B cell (primary cell): ENCODE measurements at regions of chr1 and their contacts with region 1.

Region 1: GRCh38 chr1:167121375-167122120 is 27.7 kb downstream of the STYXL2 start:
- DNase-seq: peak; percentile 34
- ATAC-seq: no peak
- H3K4me3 ChIP-seq: peak overlapping the region in 4 of 5 experiments; percentile 16 to 59 (median 46)
- H3K4me3 Mint-ChIP-seq: peak overlapping the region; percentile 84
- H3K27ac ChIP-seq: no peak overlapping the region
- H3K27ac Mint-ChIP-seq: peak overlapping the region; percentile 22
- H3K4me1 ChIP-seq: peaks cover 8 to 9% of the 10 kb centered on the region in 2 donors
- H3K4me1 Mint-ChIP-seq: peaks cover 4% of the 10 kb centered on the region
- H3K27me3 ChIP-seq: peaks cover 0 to 23% (median 6%) of the 10 kb centered on the region in 4 experiments
- H3K27me3 Mint-ChIP-seq: peaks cover 42% of the 10 kb centered on the region
- CTCF ChIP-seq: no peak

Region 2: DNA sequence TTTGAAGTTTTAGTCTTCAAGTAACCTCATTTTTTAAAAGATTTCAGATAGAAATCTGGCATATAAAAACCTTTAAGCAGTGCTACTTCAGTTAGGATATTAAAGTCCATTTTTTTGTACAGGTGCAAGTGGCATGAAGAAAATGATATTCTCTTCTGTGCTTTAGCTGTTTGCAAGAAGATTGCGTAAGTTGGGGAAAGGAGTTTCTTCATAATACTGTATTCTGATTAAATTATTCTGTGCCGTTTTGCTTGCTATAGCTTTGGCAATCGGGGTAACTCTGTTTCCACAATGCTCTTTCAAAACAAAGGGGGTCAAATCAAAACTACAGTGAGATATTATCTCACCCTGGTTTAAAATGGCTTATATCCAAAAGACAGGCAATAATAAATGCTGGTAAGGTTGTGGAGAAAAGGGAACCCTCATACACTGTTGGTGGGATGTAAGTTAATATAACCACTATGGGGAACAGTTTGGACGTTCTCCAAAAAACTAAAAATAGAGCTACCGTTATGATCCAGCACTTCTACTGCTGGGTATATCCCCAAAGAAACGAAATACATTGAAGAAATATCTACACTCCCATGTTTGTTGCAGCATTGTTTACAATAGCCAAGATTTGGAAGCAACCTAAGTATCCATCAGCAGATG is 105.3 kb before region 1 on chr1:
- CTCF ChIA-PET with region 1: no interaction called
- POLR2A ChIA-PET with region 1: no interaction called
- intact Hi-C with region 1: no loop called
- DNase-seq: no peak
- ATAC-seq: no peak
- H3K4me3 ChIP-seq: no peak overlapping the region
- H3K4me3 Mint-ChIP-seq: no peak overlapping the region
- H3K27ac ChIP-seq: no peak overlapping the region
- H3K27ac Mint-ChIP-seq: no peak overlapping the region
- H3K4me1 ChIP-seq: no peaks in the 10 kb centered on the region
- H3K4me1 Mint-ChIP-seq: no peaks in the 10 kb centered on the region
- H3K27me3 ChIP-seq: peaks cover 0 to 8% (median 2%) of the 10 kb centered on the region in 4 experiments
- H3K27me3 Mint-ChIP-seq: peaks cover 22% of the 10 kb centered on the region
- CTCF ChIP-seq: no peak

Region 3: GRCh38 chr1:167066333-167067122 is 55.0 kb before region 1 on chr1:
- CTCF ChIA-PET with region 1: interaction called, 6 read pairs
- POLR2A ChIA-PET with region 1: no interaction called
- intact Hi-C with region 1: loop called (anchors 2 kb)
- DNase-seq: peak; percentile 83
- ATAC-seq: peak; percentile 99
- H3K4me3 ChIP-seq: peak overlapping the region in 1 of 5 experiments; percentile 20
- H3K4me3 Mint-ChIP-seq: no peak overlapping the region
- H3K27ac ChIP-seq: no peak overlapping the region
- H3K27ac Mint-ChIP-seq: no peak overlapping the region
- H3K4me1 ChIP-seq: peaks cover 0 to 7% of the 10 kb centered on the region in 2 donors
- H3K4me1 Mint-ChIP-seq: peaks cover 4% of the 10 kb centered on the region
- H3K27me3 ChIP-seq: no peaks in the 10 kb centered on the region
- H3K27me3 Mint-ChIP-seq: no peaks in the 10 kb centered on the region
- CTCF ChIP-seq: peak; percentile 98

Region 4: DNA sequence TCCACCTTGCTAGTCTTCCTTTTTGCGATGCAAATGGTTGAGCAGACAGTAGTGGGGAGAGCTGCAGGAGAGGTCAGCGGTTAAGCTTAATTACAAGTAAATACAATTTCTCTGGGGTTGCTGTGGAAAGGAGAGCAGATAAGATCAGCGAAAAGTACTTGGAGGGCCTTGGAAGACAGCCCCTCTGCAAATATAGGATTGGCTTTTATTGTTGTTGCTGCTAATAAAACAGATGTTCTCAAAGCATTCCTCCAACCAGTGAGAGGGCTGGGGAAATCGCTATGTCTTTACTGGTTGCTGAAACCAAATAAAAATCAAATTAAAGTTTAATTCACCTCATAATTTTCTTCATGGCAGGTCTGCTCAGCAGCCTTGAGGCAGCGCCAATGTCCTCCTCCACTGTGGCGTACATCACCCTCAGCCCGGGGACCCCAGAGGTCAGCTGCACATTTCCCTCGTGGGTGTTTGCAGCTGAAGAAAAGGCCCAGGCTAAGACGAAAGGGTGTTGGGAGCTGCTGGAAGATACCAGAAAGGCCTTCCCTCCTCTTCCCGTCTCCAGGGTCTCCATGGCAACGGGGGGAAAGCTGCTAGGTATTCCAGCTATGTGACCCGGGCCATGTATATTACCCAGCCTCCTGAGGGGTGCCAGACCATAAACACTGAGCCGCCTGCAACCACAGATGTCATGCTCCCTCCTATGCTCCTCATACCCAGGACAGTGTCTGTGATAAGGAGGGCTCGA is 44.6 kb after region 1 on chr1:
- CTCF ChIA-PET with region 1: no interaction called
- POLR2A ChIA-PET with region 1: no interaction called
- intact Hi-C with region 1: no loop called
- DNase-seq: no peak
- ATAC-seq: no peak
- H3K4me3 ChIP-seq: no peak overlapping the region
- H3K4me3 Mint-ChIP-seq: no peak overlapping the region
- H3K27ac ChIP-seq: no peak overlapping the region
- H3K27ac Mint-ChIP-seq: no peak overlapping the region
- H3K4me1 ChIP-seq: no peaks in the 10 kb centered on the region
- H3K4me1 Mint-ChIP-seq: no peaks in the 10 kb centered on the region
- H3K27me3 ChIP-seq: peaks cover 0 to 10% (median 5%) of the 10 kb centered on the region in 4 experiments
- H3K27me3 Mint-ChIP-seq: peaks cover 48% of the 10 kb centered on the region
- CTCF ChIP-seq: no peak

Region 5: GRCh38 chr1:167207940-167208623 is 86.5 kb after region 1 on chr1:
- CTCF ChIA-PET with region 1: no interaction called
- POLR2A ChIA-PET with region 1: no interaction called
- intact Hi-C with region 1: no loop called
- DNase-seq: no peak
- ATAC-seq: no peak
- H3K4me3 ChIP-seq: no peak overlapping the region
- H3K4me3 Mint-ChIP-seq: no peak overlapping the region
- H3K27ac ChIP-seq: no peak overlapping the region
- H3K27ac Mint-ChIP-seq: no peak overlapping the region
- H3K4me1 ChIP-seq: peaks cover 0 to 4% of the 10 kb centered on the region in 2 donors
- H3K4me1 Mint-ChIP-seq: peaks cover 6% of the 10 kb centered on the region
- H3K27me3 ChIP-seq: no peaks in the 10 kb centered on the region
- H3K27me3 Mint-ChIP-seq: no peaks in the 10 kb centered on the region
- CTCF ChIP-seq: no peak